ENCODE measurements at regions of chr2 and their contacts with region 1.

Region 1: GRCh38 chr2:218852911-218853667 is 6.5 kb upstream of the WNT6 start:
- DNase-seq: no peak
- ATAC-seq: peak; percentile 84
- H3K4me3 ChIP-seq: no peak overlapping the region
- H3K27ac ChIP-seq: no peak overlapping the region
- H3K4me1 ChIP-seq: no peaks in the 10 kb centered on the region
- H3K27me3 ChIP-seq: peaks cover 7 to 18% of the 10 kb centered on the region in 2 experiments
- CTCF ChIP-seq: peak; percentile 75 to 88 (median 77)
- EP300 ChIP-seq: no peak
- POLR2A ChIP-seq: no peak
- RAD21 ChIP-seq: peak; percentile 91

Region 2: DNA sequence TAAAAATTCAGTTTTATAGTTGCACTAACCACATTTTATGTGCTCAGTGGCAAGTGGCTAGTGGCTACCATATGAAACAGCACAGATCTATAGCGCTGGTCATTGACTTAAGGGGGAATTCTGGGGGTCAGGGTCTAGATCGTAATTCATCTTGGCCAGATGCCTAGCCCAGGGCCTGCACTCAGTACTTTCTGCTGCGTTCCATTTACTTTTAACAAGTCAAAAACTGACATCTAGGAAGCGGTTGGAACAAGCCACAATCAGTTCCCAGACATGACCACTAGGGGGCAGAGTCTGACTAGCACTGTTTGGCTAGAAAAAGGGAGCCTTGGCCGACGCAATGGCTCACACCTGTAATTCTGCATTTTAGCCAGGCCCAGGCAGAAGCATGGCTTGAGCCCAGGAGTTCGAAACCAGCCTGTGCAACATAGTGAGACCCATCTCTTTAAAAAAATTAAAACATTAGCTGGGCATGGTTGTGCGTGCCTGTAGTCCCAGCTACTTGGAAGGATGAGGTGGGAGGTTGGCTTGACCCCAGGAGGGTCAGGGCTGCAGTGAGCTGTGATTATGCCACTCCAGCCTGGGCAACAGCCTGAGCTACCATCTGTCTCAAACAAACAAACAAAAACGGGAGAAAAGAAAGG is 551.8 kb before region 1 on chr2:
- CTCF ChIA-PET with region 1: no interaction called
- POLR2A ChIA-PET with region 1: no interaction called
- RAD21 ChIA-PET with region 1: no interaction called
- SMC1A ChIA-PET with region 1: no interaction called
- in situ Hi-C with region 1: no loop called
- intact Hi-C with region 1: loop called (anchors 5 kb)
- DNase-seq: peak; percentile 82
- ATAC-seq: peak; percentile 97
- H3K4me3 ChIP-seq: no peak overlapping the region
- H3K27ac ChIP-seq: no peak overlapping the region
- H3K4me1 ChIP-seq: no peaks in the 10 kb centered on the region
- H3K27me3 ChIP-seq: no peaks in the 10 kb centered on the region
- CTCF ChIP-seq: peak; percentile 90 to 93 (median 92)
- EP300 ChIP-seq: no peak
- POLR2A ChIP-seq: no peak
- RAD21 ChIP-seq: peak; percentile 97

Region 3: GRCh38 chr2:218659258-218659987 is 193.7 kb before region 1 on chr2 and contains the starts of genes BCS1L and ZNF142:
- CTCF ChIA-PET with region 1: interaction called, 34 read pairs
- POLR2A ChIA-PET with region 1: no interaction called
- RAD21 ChIA-PET with region 1: interaction called, 16 read pairs
- SMC1A ChIA-PET with region 1: interaction called, 25 read pairs
- in situ Hi-C with region 1: loop called (anchors 5 kb)
- intact Hi-C with region 1: no loop called
- DNase-seq: peak; percentile 71
- ATAC-seq: peak; percentile 97
- H3K4me3 ChIP-seq: peak within 1 kb of the TSS; percentile 96
- H3K27ac ChIP-seq: peak within 1 kb of the TSS; percentile 73
- H3K4me1 ChIP-seq: peaks cover 18% of the 10 kb centered on the region
- H3K27me3 ChIP-seq: no peaks in the 10 kb centered on the region
- CTCF ChIP-seq: no peak
- EP300 ChIP-seq: peak in 1 of 2 experiments; percentile 31; a peak in 1 of 4 replicates
- POLR2A ChIP-seq: peak; percentile 91
- RAD21 ChIP-seq: no peak
- polyA plus RNA-seq, gene BCS1L: 77.1 to 77.8 TPM
- polyA plus RNA-seq, gene ZNF142: 1.3 to 2.4 TPM

Region 4: DNA sequence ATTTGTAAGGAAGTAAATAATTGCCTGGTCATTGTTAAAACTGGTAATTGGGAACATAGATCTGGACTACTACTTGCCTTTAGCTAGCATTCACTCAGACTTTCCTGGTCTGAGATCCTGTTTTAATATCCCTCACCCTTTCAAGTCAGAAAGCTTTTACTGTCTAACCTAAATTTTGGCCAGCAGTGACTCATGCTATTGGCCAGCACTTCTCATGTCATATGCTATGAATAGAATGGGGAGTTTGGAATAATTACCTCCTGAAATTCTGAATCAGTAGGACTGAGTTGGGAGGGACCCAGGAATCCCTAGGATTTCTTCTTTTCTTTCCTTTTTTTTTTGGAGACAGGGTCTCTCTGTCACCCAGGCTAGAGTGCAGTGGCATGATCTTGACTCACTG is 161.9 kb before region 1 on chr2:
- CTCF ChIA-PET with region 1: interaction called, 17 read pairs
- POLR2A ChIA-PET with region 1: no interaction called
- RAD21 ChIA-PET with region 1: interaction called, 10 read pairs
- SMC1A ChIA-PET with region 1: no interaction called
- in situ Hi-C with region 1: no loop called
- intact Hi-C with region 1: no loop called
- DNase-seq: no peak
- ATAC-seq: no peak
- H3K4me3 ChIP-seq: no peak overlapping the region
- H3K27ac ChIP-seq: no peak overlapping the region
- H3K4me1 ChIP-seq: no peaks in the 10 kb centered on the region
- H3K27me3 ChIP-seq: no peaks in the 10 kb centered on the region
- CTCF ChIP-seq: no peak
- EP300 ChIP-seq: no peak
- POLR2A ChIP-seq: no peak
- RAD21 ChIP-seq: no peak

Region 5: DNA sequence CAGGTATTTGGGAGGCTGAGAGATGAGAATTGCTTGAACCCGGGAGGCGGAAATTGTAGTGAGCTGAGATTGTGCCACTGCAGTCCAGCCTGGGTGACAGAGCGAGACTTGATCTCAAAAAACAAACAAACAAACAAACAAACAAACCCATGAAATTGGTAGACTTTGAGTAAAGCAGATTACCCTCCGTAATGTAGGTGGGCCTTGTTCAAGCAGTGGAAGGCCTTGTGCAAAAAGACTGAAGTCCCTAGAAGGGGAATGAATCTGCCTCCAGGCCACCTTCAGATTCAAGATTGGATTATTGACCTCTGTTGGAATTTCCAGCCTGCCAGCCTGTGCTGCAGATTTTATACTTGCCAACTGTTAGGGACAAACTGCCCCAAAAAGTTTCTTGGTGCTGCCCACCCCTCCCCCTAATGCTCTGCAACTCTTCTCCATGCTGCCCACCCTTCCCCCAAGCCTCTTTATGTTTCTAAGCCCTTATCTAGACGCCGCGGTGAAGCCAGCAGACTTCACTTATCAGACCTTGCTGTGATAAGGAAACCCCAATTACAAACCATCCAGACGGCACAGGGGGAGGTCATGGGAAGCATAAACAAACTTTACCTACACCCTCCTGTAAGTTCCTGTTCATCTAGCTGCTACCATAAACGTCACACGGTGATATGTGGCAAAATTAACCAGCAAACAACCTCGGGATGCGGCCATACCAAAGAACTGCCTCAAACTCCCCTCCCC is 54.2 kb before region 1 on chr2:
- CTCF ChIA-PET with region 1: no interaction called
- POLR2A ChIA-PET with region 1: no interaction called
- RAD21 ChIA-PET with region 1: no interaction called
- SMC1A ChIA-PET with region 1: no interaction called
- in situ Hi-C with region 1: no loop called
- intact Hi-C with region 1: no loop called
- DNase-seq: no peak
- ATAC-seq: no peak
- H3K4me3 ChIP-seq: no peak overlapping the region
- H3K27ac ChIP-seq: no peak overlapping the region
- H3K4me1 ChIP-seq: no peaks in the 10 kb centered on the region
- H3K27me3 ChIP-seq: peaks cover 0 to 2% of the 10 kb centered on the region in 2 experiments; a peak in 2 of 4 replicates
- CTCF ChIP-seq: no peak
- EP300 ChIP-seq: no peak
- POLR2A ChIP-seq: no peak
- RAD21 ChIP-seq: no peak

Region 6: DNA sequence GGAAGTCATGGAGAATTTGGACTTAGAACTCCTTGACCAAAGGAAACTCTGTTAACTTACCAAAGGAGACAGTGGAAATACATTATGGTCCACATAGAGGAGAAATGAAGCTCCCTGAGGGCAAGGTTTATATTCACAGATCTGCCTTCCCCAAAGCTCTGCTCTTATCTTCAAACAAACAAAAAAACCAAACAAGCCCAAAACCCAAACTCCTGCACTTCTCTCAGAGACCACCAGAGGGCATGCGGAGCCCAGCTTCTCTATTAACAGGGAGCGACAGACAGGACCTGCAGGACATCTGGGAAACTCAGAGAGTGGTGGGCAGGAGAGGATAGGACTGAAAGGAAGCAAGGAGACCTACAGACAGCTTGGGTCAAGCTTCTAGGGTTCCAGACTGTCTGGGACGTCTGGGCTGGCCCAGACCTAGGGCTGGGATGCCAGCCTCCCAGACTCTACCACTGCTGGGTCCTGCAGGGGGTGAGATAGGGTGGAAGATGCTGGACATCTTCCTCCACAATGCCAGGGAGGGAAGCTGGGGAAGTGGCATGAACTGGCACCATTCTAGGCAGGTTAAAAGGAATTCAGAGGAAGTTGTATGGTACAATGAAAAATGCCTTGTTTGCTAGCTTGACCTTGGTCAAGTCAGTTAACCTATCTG is 23.6 kb after region 1 on chr2:
- CTCF ChIA-PET with region 1: interaction called, 20 read pairs
- POLR2A ChIA-PET with region 1: no interaction called
- RAD21 ChIA-PET with region 1: interaction called, 19 read pairs
- SMC1A ChIA-PET with region 1: interaction called, 26 read pairs
- in situ Hi-C with region 1: no loop called
- intact Hi-C with region 1: no loop called
- DNase-seq: peak; percentile 56
- ATAC-seq: peak; percentile 4
- H3K4me3 ChIP-seq: no peak overlapping the region
- H3K27ac ChIP-seq: no peak overlapping the region
- H3K4me1 ChIP-seq: peaks cover 38% of the 10 kb centered on the region
- H3K27me3 ChIP-seq: peaks cover 10 to 23% of the 10 kb centered on the region in 2 experiments
- CTCF ChIP-seq: peak; percentile 96 to 99 (median 98); a peak in 5 of 6 replicates
- EP300 ChIP-seq: no peak
- POLR2A ChIP-seq: no peak
- RAD21 ChIP-seq: peak; percentile 100

Region 7: DNA sequence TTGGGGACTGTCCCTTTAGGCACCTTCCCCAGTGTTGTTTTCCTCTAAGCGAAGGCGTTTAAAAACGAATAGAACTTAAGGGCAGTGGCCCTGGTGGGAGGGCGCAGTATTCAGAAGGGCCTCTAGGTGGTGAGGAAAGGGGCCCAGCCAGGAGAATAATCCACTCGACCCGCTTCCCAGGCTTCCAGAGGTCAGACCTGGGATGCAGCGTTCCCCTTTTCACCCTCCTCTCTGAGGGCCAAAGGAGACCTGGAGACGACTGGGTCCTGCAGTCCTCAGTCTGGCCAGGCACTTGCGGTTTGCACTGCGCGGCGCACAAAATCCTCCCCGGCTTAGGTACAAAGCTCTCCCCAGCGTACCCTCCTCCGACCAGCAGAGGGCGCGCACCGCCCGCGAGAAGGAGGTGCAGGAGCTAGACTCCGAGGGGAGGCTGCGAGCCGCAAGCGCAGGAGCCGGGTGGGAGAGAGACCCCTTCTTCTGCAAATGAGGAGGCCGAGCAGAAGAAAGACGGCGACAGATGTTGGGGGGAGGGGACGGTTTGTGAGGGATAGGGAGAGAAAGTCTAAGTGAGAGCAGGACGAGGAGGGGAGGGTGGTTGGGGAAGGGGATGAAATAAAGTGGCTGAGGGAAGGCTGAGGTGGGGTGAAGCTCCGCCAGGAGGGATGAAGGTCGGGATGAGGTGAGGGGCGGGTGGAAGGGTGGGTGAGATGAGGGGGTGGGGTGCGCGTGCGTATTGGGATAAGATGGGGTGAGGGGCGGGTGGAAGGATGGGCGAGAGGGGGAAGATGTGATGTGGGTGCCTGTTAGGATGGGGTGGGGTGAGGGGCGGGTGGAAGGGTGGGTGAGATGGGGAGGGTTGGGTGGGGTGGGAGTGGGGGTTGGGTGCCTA is 127.0 kb after region 1 on chr2:
- CTCF ChIA-PET with region 1: interaction called, 9 read pairs
- POLR2A ChIA-PET with region 1: no interaction called
- RAD21 ChIA-PET with region 1: no interaction called
- SMC1A ChIA-PET with region 1: interaction called, 4 read pairs
- in situ Hi-C with region 1: no loop called
- intact Hi-C with region 1: loop called (anchors 5 kb)
- DNase-seq: peak; percentile 24
- ATAC-seq: peak; percentile 99
- H3K4me3 ChIP-seq: 0 out of 2 replicates have a peak overlapping the region, but pooled peaks have one; percentile 44
- H3K27ac ChIP-seq: no peak overlapping the region
- H3K4me1 ChIP-seq: no peaks in the 10 kb centered on the region; the same call in 1 of the 2 replicates
- H3K27me3 ChIP-seq: peaks cover 24 to 30% of the 10 kb centered on the region in 2 experiments
- CTCF ChIP-seq: peak; percentile 87 to 93 (median 88)
- EP300 ChIP-seq: no peak
- POLR2A ChIP-seq: no peak
- RAD21 ChIP-seq: peak; percentile 69

Region 8: DNA sequence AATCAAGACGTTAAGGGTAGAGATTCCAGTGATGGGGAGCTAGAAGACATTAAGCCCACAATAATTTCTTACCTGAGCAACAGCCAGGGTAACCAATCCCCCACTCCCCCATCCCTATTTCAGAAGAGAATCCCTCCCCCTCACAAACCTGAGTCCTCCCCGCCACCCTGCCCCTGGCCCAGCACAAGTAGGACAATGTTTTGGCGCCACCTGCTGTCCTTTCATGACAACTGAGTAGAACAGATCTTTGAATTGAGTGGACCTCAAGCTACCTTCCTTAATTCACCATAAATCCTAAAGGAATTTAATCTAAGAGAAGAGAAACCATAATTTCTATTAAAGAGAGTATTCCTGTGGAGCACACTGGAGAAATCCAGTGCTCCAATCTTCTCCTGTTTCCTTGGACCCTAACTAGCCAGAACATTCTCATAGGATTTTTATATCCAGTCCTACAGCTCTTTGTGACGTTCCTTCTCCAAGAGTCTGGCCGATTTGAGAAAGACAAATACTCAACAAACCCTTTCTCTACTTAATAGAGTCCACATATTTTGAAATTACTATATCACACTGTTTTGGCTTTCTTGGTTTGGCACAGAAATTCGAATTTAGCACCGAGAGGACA is 266.4 kb after region 1 on chr2:
- CTCF ChIA-PET with region 1: interaction called, 6 read pairs
- POLR2A ChIA-PET with region 1: no interaction called
- RAD21 ChIA-PET with region 1: interaction called, 5 read pairs
- SMC1A ChIA-PET with region 1: no interaction called
- in situ Hi-C with region 1: no loop called
- intact Hi-C with region 1: loop called (anchors 5 kb)
- DNase-seq: peak; percentile 5
- ATAC-seq: peak; percentile 89
- H3K4me3 ChIP-seq: no peak overlapping the region
- H3K27ac ChIP-seq: no peak overlapping the region
- H3K4me1 ChIP-seq: no peaks in the 10 kb centered on the region
- H3K27me3 ChIP-seq: no peaks in the 10 kb centered on the region
- CTCF ChIP-seq: peak; percentile 68 to 74 (median 71)
- EP300 ChIP-seq: no peak
- POLR2A ChIP-seq: no peak
- RAD21 ChIP-seq: peak; percentile 90

Region 9: DNA sequence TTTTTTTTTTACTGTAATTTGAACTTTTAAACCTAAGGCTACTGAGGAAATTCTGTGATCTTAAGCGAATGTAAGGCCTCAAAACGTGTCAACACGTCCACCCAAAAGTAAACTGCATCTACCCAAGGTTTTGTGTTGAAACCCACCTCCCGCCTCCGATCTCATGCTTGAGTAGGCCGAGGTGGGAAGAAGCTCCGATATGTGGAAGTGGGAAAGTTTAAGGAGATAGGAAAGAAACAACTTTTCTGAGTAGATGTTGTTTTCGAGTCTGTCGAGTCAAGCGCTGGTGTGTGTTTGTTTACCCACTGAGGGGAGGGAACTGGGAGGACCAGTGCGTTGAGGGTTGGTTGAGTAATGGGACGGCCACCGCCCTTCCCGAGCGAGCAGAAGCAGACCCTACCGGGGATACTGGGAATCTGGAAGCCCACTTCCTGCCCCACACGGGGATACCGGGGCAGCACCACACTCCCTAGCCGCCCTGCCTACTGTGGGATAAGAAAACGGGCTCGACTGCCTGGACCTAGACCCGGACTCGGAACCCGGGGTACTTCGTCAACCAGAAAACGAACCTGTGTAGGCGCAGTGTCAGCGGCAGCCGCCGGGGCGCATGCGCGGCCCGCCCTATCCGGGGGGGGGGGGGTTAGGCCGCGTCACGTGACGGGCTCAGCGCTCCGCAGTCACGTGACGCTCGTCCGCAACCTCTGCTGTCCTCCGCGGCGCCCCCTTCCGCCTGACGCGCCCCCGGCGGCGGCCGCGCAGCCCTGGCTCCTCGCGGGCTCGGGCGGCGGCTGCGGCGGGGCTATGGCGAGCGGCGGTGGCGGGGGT is 324.7 kb after region 1 on chr2 and contains the start of gene RETREG2:
- CTCF ChIA-PET with region 1: no interaction called
- POLR2A ChIA-PET with region 1: no interaction called
- RAD21 ChIA-PET with region 1: no interaction called
- SMC1A ChIA-PET with region 1: no interaction called
- in situ Hi-C with region 1: no loop called
- intact Hi-C with region 1: no loop called
- DNase-seq: peak; percentile 72
- ATAC-seq: peak; percentile 62
- H3K4me3 ChIP-seq: peak within 1 kb of the TSS; percentile 83
- H3K27ac ChIP-seq: peak within 1 kb of the TSS; percentile 98
- H3K4me1 ChIP-seq: peaks cover 10% of the 10 kb centered on the region
- H3K27me3 ChIP-seq: no peaks in the 10 kb centered on the region
- CTCF ChIP-seq: peak; percentile 26 to 53 (median 35); a peak in 4 of 6 replicates
- EP300 ChIP-seq: peak in 1 of 2 experiments; percentile 50; a peak in 2 of 4 replicates
- POLR2A ChIP-seq: peak; percentile 91
- RAD21 ChIP-seq: no peak
- polyA plus RNA-seq, gene RETREG2: 10.1 to 25.2 TPM